Right ventricle myocardium inferior (tissue), 1 donor: ENCODE measurements at regions of chr3 and their contacts with region 1.

Region 1: GRCh38 chr3:64150623-64151207 is 74.6 kb downstream of the PRICKLE2 start:
- DNase-seq: peak; percentile 81
- ATAC-seq: peak; percentile 94

Region 2: DNA sequence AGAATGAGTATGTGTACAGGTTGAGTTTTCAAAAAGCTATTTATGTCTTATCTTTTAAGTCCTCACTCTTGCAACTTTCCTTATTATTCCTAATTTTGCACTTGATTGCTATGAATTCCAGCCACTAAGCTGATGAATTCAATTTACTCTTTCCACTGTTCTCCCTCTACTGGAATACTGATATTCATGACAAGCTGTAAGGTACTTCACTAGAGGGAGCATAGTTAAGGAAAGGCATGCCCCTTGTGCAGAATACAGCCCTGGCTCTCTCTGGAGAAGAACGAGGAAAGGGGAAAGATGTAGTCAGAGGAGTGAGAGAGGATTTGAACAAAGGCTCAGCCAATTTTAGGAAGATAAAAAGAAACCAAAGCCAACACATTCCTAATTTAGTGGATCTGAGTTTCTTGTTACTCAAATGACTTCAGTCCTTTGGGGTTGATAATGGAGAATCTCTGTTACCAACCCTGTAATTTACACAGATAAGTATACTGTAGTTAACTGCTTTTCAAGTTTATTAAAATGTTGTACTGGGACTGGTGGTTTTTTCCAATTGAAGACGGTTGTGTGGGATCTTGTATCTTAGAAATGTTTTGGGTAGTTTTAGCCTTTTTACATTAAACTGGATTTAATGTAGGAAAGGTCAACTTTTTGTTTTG is 242.5 kb before region 1 on chr3:
- intact Hi-C with region 1: no loop called
- DNase-seq: no peak
- ATAC-seq: no peak

Region 3: GRCh38 chr3:64224826-64225610 is 74.3 kb after region 1 on chr3 and contains the start of gene PRICKLE2:
- intact Hi-C with region 1: loop called (anchors 5 kb)
- DNase-seq: peak; percentile 83
- ATAC-seq: peak; percentile 69
- total RNA-seq, gene PRICKLE2: 7.7 TPM